ENCODE measurements at regions of chr3 and their contacts with region 1.

Region 1: DNA sequence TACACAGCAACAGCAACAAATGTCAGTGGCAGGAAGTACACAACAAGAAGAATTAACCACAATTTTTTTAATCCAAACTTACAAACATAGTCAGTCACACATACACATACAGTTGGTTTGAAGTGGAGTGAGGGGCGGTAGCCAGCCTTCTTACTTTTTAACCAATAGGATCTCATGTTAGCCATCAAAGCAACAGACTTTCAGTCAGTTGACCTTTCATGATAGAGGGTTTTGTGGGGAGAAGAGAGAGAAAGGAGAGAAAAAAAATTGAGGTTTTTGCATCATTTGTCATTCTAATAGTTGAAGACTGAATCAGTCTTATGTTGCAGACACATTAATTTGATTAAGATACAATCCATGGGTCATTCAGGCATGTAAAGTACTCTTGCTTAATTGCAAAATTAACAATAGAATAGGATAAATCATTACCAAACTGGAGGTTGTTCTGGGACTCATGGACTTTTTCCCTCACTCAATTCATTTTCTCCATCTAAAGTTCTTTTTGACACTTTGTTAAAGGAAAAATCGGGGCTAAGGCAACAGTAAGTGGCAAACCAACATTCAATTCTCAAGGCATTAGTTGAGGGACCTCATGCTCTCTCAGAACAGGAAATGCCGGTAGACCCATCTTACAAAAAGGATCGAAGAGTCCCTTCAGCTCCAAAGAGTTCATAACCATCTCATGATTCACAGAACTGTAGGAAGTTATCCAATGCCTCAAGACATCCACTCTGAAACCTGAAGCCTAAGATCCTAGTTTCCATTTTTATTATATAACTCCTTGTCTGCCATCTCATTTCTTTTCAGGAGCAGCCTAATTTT is 159.5 kb upstream of the LPP start:
- DNase-seq: peak in 1 of 2 donors; percentile 65
- ATAC-seq: peak; percentile 87 to 92 (median 89)
- H3K4me3 ChIP-seq: no peak overlapping the region
- H3K4me3 Mint-ChIP-seq: peak overlapping the region; percentile 63
- H3K27ac ChIP-seq: peak overlapping the region; percentile 74
- H3K27ac Mint-ChIP-seq: peak overlapping the region; percentile 72 to 87
- H3K4me1 ChIP-seq: peaks cover 22% of the 10 kb centered on the region
- H3K4me1 Mint-ChIP-seq: peaks cover 61 to 66% of the 10 kb centered on the region in 2 donors
- H3K27me3 ChIP-seq: no peaks in the 10 kb centered on the region
- H3K27me3 Mint-ChIP-seq: no peaks in the 10 kb centered on the region
- CTCF ChIP-seq: no peak

Region 2: DNA sequence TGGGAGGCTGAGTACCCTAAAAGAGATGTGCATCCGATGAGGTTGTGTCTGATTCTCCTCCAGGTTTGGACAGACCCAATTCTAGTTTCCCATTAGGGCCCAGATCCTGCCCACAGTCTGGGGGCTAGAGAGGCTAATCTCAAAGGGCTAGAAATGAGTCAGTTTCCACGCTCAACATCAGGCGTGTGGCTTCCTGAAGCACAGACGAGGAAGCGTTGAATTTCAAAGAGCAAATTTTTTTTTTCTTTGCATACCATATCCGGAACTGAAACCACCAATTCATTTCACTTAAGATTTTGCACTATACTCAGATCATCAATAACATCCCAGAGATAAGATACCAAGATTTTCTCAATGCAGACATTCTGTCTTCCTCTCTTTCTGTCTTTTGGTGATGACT is 75.4 kb before region 1 on chr3:
- intact Hi-C with region 1: loop called (anchors 5 kb)
- DNase-seq: peak; percentile 38 to 80
- ATAC-seq: peak; percentile 87 to 88 (median 87)
- H3K4me3 ChIP-seq: peak overlapping the region; percentile 5
- H3K4me3 Mint-ChIP-seq: peak overlapping the region; percentile 80
- H3K27ac ChIP-seq: peak overlapping the region; percentile 85
- H3K27ac Mint-ChIP-seq: peak overlapping the region; percentile 86 to 88
- H3K4me1 ChIP-seq: peaks cover 18% of the 10 kb centered on the region
- H3K4me1 Mint-ChIP-seq: peaks cover 39 to 46% of the 10 kb centered on the region in 2 donors
- H3K27me3 ChIP-seq: no peaks in the 10 kb centered on the region
- H3K27me3 Mint-ChIP-seq: no peaks in the 10 kb centered on the region
- CTCF ChIP-seq: no peak

Region 3: DNA sequence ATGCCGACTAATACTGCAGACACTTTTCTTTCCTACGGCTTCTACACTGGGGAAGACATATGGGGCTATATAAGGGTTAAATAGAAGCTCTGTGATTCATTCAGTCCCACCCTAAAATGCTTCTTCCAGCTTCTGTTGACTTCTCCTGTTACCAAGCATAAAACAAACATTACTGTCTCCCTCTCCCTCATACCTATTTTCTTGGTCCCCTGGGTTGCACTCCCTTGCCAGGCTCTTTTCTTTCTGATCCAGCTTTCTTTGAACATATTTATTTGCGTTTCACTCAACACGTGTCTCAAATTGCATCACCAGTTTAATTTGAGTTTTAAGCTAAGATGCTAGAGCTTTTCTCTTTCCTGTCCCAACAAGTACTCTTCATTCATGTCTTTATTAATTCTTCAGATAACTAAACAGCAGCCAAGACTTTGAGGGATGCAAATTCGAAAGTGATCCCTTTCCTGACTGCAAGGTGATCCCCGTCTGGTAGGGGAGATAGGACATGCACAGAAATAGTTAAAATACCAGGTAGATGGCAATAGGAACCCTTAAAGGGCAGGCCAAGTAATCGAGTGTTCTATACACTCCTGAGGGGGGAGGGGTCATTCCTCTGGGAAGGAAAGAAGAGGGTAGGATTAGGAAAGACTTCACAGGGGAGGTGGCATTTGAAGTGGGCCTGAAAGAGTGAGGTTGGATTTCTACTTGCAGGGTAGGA is 50.6 kb before region 1 on chr3:
- intact Hi-C with region 1: no loop called
- DNase-seq: no peak
- ATAC-seq: no peak
- H3K4me3 ChIP-seq: no peak overlapping the region
- H3K4me3 Mint-ChIP-seq: no peak overlapping the region
- H3K27ac ChIP-seq: no peak overlapping the region
- H3K27ac Mint-ChIP-seq: no peak overlapping the region
- H3K4me1 ChIP-seq: peaks cover 19% of the 10 kb centered on the region
- H3K4me1 Mint-ChIP-seq: peaks cover 17 to 19% of the 10 kb centered on the region in 2 donors
- H3K27me3 ChIP-seq: no peaks in the 10 kb centered on the region
- H3K27me3 Mint-ChIP-seq: no peaks in the 10 kb centered on the region
- CTCF ChIP-seq: no peak

Measured in natural killer cell (primary cell).